BJ (cell line): ENCODE measurements at regions of chr10 and their contacts with region 1.

Region 1: GRCh38 chr10:24724381-24725228 is 918 bp upstream of the ARHGAP21 start:
- DNase-seq: peak; percentile 81
- H3K4me3 ChIP-seq: peak overlapping the region; percentile 57
- H3K27me3 ChIP-seq: no peaks in the 10 kb centered on the region
- CTCF ChIP-seq: no peak

Region 2: GRCh38 chr10:24252316-24252715 is 472.3 kb before region 1 on chr10:
- CTCF ChIA-PET with region 1: no interaction called
- POLR2A ChIA-PET with region 1: interaction called, 13 read pairs
- DNase-seq: no peak
- H3K4me3 ChIP-seq: no peak overlapping the region
- H3K27me3 ChIP-seq: no peaks in the 10 kb centered on the region
- CTCF ChIP-seq: no peak